Activated CD8-positive, alpha-beta T cell treated with anti-CD3 and anti-CD28 coated beads for 36 hours (primary cell): ENCODE measurements at regions of chr7 and their contacts with region 1.

Region 1: DNA sequence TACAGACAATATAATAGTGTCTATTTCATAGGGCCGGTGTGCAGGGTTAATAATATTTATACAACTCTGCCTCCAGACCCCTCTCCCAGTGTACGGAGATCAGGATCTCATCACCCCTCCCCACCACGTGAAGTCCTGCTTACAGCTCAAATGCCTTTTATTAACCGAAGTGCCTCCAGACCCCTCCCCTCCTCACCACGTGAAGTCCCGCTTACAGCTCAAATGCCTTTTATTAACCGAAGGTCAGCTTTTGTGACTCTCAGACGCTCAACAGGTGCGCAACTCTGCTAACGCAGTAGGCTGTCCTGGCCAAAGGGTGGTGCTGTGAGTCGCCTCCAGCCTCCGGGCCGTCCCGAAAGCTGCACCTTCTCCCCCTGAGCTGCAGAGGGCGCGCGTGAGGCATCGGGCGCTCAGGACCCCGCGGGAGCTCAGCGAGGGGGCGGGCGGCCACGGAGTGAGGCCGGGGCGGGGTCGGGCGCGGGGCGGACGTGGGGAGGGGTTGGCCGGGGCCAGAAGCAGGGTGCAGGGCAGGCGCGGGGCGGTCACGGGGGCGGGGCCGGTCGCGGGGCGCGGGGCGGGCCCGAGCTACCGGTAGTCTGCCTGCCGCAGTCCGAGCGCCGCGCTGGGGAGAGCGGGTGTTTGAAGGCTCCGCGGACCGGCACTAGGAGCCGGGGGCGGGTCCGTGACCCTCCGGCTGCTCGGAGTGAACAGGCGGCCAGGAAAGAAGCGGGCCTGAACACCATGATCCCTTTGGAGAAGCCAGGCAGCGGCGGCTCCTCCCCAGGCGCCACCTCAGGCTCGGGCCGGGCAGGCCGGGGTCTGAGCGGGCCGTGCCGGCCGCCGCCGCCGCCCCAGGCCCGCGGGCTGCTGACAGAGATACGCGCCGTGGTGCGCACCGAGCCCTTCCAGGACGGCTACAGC is at the start of gene STK17A:
- DNase-seq: peak; percentile 93
- ATAC-seq: peak; percentile 85
- H3K4me3 Mint-ChIP-seq: peak within 1 kb of the TSS; percentile 93
- H3K27ac Mint-ChIP-seq: peak within 1 kb of the TSS; percentile 93
- H3K4me1 Mint-ChIP-seq: peaks cover 15% of the 10 kb centered on the region
- H3K27me3 Mint-ChIP-seq: peaks cover 2% of the 10 kb centered on the region
- CTCF ChIP-seq: peak; percentile 98
- total RNA-seq, gene STK17A: 42.4 to 46.1 TPM

Region 2: DNA sequence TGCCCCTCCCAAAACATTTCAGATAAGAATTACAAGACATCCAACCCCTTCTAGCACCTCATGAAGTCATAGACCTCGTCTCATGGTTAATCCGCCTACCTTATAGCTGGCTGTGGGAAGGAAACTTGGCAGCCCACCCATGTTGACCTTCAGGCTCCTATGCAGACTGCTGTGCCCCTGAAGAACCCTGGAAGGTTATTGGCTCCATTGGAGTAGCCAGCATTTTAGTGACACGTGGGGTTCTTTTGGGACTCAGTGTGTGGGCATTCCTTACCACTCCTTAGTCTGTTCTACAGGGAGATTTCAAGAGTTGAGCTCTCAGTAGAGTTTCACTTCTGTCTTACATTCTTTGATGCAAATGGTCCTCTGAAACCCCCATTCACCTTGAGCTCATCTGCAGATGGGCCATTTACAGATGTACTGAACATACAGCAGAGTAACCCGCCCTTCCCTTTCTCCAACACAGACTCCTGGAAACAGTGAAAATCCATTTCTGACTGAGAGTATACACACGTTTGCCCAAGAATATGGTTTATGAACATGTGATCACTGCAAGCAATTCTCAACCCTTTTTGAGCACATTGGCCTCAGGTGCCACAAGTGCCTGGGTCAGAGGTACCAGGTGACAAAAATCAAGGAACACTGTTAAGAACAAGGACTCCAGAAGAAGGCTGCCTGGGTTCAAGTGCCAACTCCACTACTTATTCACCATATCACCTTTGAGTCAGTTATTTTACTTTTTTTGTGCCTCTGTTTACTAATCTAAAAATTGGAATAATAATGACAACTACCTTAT is 524.3 kb before region 1 on chr7:
- CTCF ChIA-PET with region 1: no interaction called
- POLR2A ChIA-PET with region 1: no interaction called
- intact Hi-C with region 1: no loop called
- DNase-seq: no peak
- ATAC-seq: no peak
- H3K4me3 Mint-ChIP-seq: no peak overlapping the region
- H3K27ac Mint-ChIP-seq: no peak overlapping the region
- H3K4me1 Mint-ChIP-seq: no peaks in the 10 kb centered on the region
- H3K27me3 Mint-ChIP-seq: peaks cover 5% of the 10 kb centered on the region
- CTCF ChIP-seq: no peak

Region 3: GRCh38 chr7:43572516-43573049 is 10.2 kb before region 1 on chr7:
- CTCF ChIA-PET with region 1: interaction called, 86 read pairs
- POLR2A ChIA-PET with region 1: interaction called, 16 read pairs
- intact Hi-C with region 1: no loop called
- DNase-seq: peak; percentile 66
- ATAC-seq: peak; percentile 83
- H3K4me3 Mint-ChIP-seq: no peak overlapping the region
- H3K27ac Mint-ChIP-seq: no peak overlapping the region
- H3K4me1 Mint-ChIP-seq: peaks cover 33% of the 10 kb centered on the region
- H3K27me3 Mint-ChIP-seq: peaks cover 1% of the 10 kb centered on the region
- CTCF ChIP-seq: no peak

Region 4: DNA sequence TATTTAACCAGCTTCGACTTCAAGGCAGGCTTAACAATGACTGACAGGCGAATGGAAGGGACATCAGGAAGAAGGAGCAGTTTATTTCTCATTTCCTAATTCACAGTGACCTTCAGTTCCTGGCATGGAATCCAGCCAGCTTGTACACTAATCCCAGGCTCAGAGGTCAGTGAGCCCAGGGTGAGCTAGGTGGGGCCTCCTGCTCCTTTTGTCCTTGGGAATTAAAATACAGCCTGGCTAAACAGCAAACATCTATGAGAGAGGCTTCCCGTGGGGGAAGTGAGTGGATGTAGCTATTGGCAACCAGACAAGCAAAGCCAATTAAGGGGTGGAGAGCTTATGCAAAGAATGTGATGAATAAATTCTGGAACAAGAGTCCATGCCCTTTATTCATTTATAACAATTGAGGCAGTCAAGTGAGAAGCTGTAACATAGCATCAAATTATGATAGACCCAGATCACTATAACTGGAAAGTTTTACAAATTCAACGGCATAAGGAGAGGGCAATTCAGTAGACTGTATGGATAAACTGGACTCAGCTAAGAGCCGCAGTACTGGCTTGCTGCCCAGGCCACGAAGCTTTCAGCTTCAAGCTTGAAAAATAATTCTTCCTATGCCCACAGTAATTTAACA is 57.2 kb after region 1 on chr7:
- CTCF ChIA-PET with region 1: interaction called, 173 read pairs
- POLR2A ChIA-PET with region 1: interaction called, 159 read pairs
- intact Hi-C with region 1: no loop called
- DNase-seq: no peak
- ATAC-seq: no peak
- H3K4me3 Mint-ChIP-seq: peak overlapping the region; percentile 7
- H3K27ac Mint-ChIP-seq: peak overlapping the region; percentile 84
- H3K4me1 Mint-ChIP-seq: peaks cover 94% of the 10 kb centered on the region
- H3K27me3 Mint-ChIP-seq: no peaks in the 10 kb centered on the region
- CTCF ChIP-seq: no peak

Region 5: DNA sequence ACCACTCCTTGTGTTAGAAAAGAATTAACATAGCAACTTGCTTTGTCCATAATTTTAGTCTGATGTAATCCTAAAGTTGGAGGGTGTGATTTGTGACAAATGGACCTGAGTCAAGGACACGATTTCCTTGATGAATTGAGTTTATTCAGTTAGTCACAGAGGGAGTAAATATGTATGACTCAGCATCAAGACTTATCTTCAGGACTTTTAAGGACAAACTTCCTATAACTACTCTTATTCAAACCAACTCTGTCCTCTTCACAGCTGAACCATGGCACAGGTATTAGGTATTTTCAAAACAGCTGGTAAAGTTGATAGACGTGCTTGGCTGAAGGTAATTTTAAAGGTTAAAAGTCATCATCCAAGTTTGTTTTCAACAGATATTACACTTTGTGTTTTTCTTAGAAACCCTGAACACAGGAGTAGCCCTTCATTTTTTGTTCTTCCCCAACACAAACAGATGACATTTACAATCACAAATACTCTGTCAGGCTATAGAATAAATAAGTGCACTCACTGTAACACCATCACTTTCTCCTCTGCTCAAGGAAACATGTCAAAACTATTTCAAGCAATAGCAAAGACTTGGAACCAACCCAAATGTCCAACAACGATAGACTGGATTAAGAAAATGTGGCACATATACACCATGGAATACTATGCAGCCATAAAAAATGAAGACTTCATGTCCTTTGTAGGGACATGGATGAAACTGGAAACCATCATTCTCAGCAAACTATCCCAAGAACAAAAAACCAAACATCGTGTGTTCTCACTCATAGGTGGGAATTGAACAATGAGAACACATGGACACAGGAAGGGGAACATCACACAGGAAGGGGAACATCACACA is 92.0 kb after region 1 on chr7:
- CTCF ChIA-PET with region 1: interaction called, 37 read pairs
- POLR2A ChIA-PET with region 1: interaction called, 4 read pairs
- intact Hi-C with region 1: no loop called
- DNase-seq: no peak
- ATAC-seq: no peak
- H3K4me3 Mint-ChIP-seq: no peak overlapping the region
- H3K27ac Mint-ChIP-seq: peak overlapping the region; percentile 48
- H3K4me1 Mint-ChIP-seq: peaks cover 79% of the 10 kb centered on the region
- H3K27me3 Mint-ChIP-seq: no peaks in the 10 kb centered on the region
- CTCF ChIP-seq: no peak

Region 6: GRCh38 chr7:43711503-43711902 is 128.7 kb after region 1 on chr7:
- CTCF ChIA-PET with region 1: interaction called, 123 read pairs
- POLR2A ChIA-PET with region 1: interaction called, 3 read pairs
- intact Hi-C with region 1: no loop called
- DNase-seq: no peak
- ATAC-seq: no peak
- H3K4me3 Mint-ChIP-seq: no peak overlapping the region
- H3K27ac Mint-ChIP-seq: no peak overlapping the region
- H3K4me1 Mint-ChIP-seq: peaks cover 24% of the 10 kb centered on the region
- H3K27me3 Mint-ChIP-seq: no peaks in the 10 kb centered on the region
- CTCF ChIP-seq: no peak

Region 7: DNA sequence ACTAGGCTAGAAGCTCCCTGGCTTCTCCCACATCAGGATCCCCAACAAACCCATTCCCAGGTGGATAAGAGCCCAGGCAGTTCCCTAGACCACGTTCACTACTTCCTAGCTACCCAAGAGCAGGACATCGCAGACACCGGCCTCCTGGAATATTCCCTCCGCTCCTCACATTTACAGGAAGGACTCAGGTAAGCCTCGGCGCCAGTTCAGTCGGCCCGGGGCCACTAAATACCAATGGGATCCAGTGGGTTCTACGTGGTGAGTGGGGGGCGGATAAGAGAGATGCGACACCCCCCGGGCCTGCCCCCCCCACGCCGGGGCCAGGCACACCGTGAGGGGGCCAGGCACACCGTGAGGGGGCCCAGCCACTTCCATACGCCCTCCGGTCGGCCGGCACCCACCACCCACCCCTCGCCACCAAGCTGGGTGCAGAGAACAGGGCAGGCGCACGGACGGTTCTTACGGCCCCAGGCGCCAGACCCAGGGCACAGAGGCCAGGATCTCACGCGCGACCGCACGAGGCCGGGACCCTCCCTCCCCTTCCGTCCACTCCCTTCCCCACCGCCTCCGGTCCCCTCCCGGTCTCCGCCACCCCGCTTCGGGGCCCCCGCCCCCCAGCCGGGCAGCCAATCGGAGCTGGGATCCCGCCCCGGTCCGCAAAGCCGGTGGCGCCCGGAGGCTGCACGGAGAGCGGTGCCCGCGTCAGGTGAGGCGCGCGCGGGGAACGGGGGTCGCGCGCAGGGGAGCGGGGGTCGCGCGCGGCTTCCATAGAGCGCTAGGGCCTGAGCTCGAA is 175.5 kb after region 1 on chr7 and contains the start of gene BLVRA:
- CTCF ChIA-PET with region 1: interaction called, 11 read pairs
- POLR2A ChIA-PET with region 1: interaction called, 4 read pairs
- intact Hi-C with region 1: no loop called
- DNase-seq: peak; percentile 57
- ATAC-seq: peak; percentile 75
- H3K4me3 Mint-ChIP-seq: peak within 1 kb of the TSS; percentile 80
- H3K27ac Mint-ChIP-seq: peak within 1 kb of the TSS; percentile 58
- H3K4me1 Mint-ChIP-seq: peaks cover 43% of the 10 kb centered on the region
- H3K27me3 Mint-ChIP-seq: peaks cover 10% of the 10 kb centered on the region
- CTCF ChIP-seq: no peak
- total RNA-seq, gene BLVRA: 30.9 to 34.2 TPM

Region 8: DNA sequence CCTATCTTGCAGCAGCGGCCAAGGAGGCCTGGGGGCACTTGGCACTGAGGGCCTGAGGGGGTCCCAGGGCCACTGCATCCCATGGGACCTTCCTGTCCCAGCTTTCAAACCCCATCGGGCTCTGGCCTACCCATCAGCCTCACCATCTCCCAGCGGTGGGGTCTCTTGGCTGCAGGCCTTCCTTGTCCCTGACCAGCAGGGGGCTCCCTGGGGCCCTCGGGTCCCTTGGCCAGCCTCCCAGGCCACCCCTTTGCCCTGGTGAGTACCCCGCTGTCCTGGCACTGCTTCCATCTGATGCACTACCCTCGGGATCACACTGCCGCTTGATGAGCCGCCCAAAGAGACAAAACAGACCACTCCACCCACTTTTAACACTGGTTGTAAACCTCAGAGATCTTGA is 661.5 kb after region 1 on chr7:
- CTCF ChIA-PET with region 1: no interaction called
- POLR2A ChIA-PET with region 1: no interaction called
- intact Hi-C with region 1: no loop called
- DNase-seq: peak; percentile 58
- ATAC-seq: peak; percentile 45
- H3K4me3 Mint-ChIP-seq: no peak overlapping the region
- H3K27ac Mint-ChIP-seq: no peak overlapping the region
- H3K4me1 Mint-ChIP-seq: no peaks in the 10 kb centered on the region
- H3K27me3 Mint-ChIP-seq: no peaks in the 10 kb centered on the region
- CTCF ChIP-seq: peak; percentile 68